Activated B cell treated with CpG ODN at 0.5 μM for 24 hours (primary cell): ENCODE measurements at regions of chr11 and their contacts with region 1.

Region 1: GRCh38 chr11:16945671-16946469 is 68.3 kb downstream of the PLEKHA7 start:
- DNase-seq: no peak
- ATAC-seq: peak; percentile 77
- H3K4me3 Mint-ChIP-seq: peak overlapping the region; percentile 61
- H3K27ac Mint-ChIP-seq: peak overlapping the region; percentile 57
- H3K4me1 Mint-ChIP-seq: peaks cover 17% of the 10 kb centered on the region
- H3K27me3 Mint-ChIP-seq: no peaks in the 10 kb centered on the region
- CTCF ChIP-seq: no peak

Region 2: GRCh38 chr11:16902781-16903378 is 43.0 kb before region 1 on chr11:
- CTCF ChIA-PET with region 1: no interaction called
- POLR2A ChIA-PET with region 1: no interaction called
- intact Hi-C with region 1: loop called (anchors 2 kb)
- DNase-seq: no peak
- ATAC-seq: peak; percentile 64
- H3K4me3 Mint-ChIP-seq: peak overlapping the region; percentile 74
- H3K27ac Mint-ChIP-seq: peak overlapping the region; percentile 92
- H3K4me1 Mint-ChIP-seq: peaks cover 33% of the 10 kb centered on the region
- H3K27me3 Mint-ChIP-seq: no peaks in the 10 kb centered on the region
- CTCF ChIP-seq: no peak

Region 3: DNA sequence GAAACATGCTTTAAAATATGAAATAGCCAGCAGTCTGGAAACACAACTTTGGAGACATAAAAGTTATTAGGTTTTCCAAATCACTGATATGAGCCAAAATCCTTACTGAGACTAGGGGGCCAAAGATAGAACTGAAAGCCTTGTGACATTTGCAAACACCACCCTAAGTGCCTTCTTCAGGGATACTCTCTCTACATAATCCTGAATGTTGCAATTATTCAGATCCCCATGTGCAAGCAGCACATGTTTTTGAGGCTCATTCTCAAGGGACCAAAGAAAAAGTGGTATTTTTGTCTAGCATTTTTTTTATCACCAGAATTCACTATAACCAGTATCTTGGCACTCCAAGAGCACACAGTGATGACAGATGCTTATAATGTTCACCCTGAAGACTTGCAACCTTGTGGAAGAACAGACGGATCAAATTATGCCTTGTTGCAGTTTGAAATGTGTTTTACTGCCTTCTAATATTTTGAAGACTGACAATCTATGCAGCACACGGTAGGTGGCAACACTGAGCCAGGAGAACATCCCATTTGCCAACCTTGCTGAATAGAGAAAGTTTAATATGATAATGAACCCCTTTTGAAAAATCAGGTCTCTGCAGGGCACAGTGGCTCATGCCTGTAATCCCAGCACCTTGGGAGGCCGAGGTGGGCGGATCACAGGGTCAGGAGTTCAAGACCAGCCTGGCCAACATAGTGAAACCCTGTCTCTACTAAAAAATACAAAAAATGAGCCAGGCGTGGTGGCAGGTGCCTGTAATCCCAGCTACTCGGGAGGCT is 10.2 kb before region 1 on chr11:
- CTCF ChIA-PET with region 1: interaction called, 4 read pairs
- POLR2A ChIA-PET with region 1: no interaction called
- intact Hi-C with region 1: loop called (anchors 1 kb)
- DNase-seq: no peak
- ATAC-seq: no peak
- H3K4me3 Mint-ChIP-seq: no peak overlapping the region
- H3K27ac Mint-ChIP-seq: no peak overlapping the region
- H3K4me1 Mint-ChIP-seq: peaks cover 1% of the 10 kb centered on the region
- H3K27me3 Mint-ChIP-seq: no peaks in the 10 kb centered on the region
- CTCF ChIP-seq: no peak

Region 4: DNA sequence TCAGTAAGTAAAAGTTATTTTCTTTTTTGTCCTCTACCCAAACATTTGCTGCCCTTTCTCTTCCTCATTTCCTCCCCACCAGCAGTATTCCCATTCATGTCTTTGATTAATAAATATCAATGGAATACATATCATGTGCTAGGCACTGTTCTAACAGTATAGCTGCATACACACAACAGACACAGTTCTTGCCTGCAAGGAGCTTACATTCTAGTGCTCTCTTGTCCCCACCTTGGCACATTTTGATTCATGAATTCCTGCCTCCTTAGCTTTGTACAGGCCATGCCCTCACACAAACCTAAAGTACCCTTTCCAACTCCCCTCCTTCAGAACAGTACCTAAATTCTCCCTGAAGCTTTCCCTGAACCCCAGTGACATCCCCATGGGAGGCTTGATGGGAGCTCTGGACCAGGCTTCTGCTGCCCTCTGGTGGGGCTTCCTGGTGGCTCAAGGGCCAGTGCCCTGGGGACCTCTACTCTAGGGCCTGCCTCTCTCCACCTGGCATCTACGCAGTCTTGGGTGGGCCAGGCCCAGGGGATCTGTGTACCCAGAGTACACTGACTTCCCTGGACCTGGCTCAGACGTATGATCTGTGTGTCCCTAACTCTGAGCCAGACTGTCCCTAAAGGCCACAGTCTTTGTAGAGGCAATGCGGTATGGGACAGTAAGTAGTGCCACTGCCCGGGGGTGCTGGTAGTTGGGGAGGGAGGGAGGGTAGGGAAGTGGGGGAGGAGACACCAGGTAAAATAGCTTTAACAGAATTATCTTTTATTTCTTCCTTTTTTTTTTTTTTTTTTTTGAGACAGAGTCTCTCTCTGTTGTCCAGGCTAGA is 117.5 kb after region 1 on chr11:
- CTCF ChIA-PET with region 1: interaction called, 5 read pairs
- POLR2A ChIA-PET with region 1: no interaction called
- intact Hi-C with region 1: loop called (anchors 1 kb)
- DNase-seq: peak; percentile 39
- ATAC-seq: peak; percentile 71
- H3K4me3 Mint-ChIP-seq: no peak overlapping the region
- H3K27ac Mint-ChIP-seq: no peak overlapping the region
- H3K4me1 Mint-ChIP-seq: peaks cover 3% of the 10 kb centered on the region
- H3K27me3 Mint-ChIP-seq: no peaks in the 10 kb centered on the region
- CTCF ChIP-seq: no peak

Region 5: DNA sequence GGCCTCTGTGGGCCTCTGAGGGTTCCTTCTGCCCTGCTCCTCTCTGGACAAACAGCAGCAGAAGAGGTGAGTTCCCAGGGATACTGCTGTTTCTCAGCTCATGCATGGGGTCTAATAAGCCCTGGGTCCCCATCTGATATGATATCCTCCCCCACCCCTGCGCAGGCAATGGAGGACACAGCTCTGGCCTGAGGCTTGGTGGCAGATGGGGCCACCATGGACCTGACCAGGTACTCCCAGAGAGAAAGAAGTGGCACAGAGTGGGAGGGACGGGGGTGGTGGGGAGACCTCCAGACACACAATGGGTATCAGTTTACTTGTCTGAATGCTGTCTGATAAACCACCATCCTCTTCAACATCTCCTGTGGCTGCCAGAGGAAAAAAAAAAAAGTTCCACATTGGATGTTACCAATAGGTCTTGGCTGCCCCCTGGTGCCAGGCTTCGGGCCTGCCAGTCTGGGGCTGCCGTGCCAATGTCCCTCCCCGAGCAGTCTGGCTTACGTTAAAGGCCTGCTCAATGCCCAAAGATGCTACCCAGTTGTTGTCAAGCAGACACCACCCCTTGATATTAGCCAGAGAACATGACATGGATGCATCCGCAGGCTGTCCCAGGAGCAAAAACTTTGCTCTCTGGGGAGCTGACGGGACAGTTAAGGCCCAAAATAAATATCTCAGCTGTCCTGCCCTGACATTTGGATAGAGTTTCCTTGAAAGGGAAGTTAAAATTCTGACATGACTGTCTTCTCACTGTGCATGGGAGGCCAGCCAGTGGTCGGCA is 558.6 kb after region 1 on chr11:
- CTCF ChIA-PET with region 1: no interaction called
- POLR2A ChIA-PET with region 1: no interaction called
- intact Hi-C with region 1: loop called (anchors 1 kb)
- DNase-seq: peak; percentile 57
- ATAC-seq: peak; percentile 66
- H3K4me3 Mint-ChIP-seq: no peak overlapping the region
- H3K27ac Mint-ChIP-seq: no peak overlapping the region
- H3K4me1 Mint-ChIP-seq: no peaks in the 10 kb centered on the region
- H3K27me3 Mint-ChIP-seq: peaks cover 5% of the 10 kb centered on the region
- CTCF ChIP-seq: no peak